ENCODE measurements at regions of chr7 and their contacts with region 1.

Region 1: GRCh38 chr7:142782922-142783900 is 12.4 kb downstream of the PRSS2 start:
- DNase-seq: peak; percentile 85 to 90
- H3K4me3 ChIP-seq: peak overlapping the region in 1 of 2 donors; percentile 43
- H3K27ac ChIP-seq: no peak overlapping the region
- H3K4me1 ChIP-seq: peaks cover 0 to 4% (median 0%) of the 10 kb centered on the region in 4 donors
- H3K27me3 ChIP-seq: peaks cover 0 to 4% of the 10 kb centered on the region in 2 donors
- CTCF ChIP-seq: peak; percentile 88 to 95

Region 2: DNA sequence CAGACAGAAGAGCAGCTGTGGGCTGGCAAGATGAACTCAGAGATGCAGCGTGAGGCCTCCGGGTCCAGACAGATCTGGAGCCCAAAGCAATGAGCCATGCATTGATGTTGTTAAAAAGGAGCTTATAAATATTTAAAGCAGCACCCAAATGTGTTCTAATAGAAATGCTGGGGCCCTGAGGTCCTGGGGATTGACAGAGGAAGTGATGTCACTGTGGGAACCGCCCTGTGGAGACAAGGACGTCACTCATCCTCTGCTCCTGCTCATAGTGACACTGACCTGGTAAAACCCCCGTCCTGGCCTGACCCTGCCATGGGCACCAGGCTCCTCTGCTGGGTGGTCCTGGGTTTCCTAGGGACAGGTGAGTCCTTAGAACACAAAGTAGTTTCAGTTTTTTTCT is 328.3 kb before region 1 on chr7:
- intact Hi-C with region 1: no loop called
- DNase-seq: no peak
- H3K4me3 ChIP-seq: no peak overlapping the region
- H3K27ac ChIP-seq: no peak overlapping the region
- H3K4me1 ChIP-seq: no peaks in the 10 kb centered on the region
- H3K27me3 ChIP-seq: peaks cover 0 to 2% of the 10 kb centered on the region in 2 donors
- CTCF ChIP-seq: no peak

Region 3: DNA sequence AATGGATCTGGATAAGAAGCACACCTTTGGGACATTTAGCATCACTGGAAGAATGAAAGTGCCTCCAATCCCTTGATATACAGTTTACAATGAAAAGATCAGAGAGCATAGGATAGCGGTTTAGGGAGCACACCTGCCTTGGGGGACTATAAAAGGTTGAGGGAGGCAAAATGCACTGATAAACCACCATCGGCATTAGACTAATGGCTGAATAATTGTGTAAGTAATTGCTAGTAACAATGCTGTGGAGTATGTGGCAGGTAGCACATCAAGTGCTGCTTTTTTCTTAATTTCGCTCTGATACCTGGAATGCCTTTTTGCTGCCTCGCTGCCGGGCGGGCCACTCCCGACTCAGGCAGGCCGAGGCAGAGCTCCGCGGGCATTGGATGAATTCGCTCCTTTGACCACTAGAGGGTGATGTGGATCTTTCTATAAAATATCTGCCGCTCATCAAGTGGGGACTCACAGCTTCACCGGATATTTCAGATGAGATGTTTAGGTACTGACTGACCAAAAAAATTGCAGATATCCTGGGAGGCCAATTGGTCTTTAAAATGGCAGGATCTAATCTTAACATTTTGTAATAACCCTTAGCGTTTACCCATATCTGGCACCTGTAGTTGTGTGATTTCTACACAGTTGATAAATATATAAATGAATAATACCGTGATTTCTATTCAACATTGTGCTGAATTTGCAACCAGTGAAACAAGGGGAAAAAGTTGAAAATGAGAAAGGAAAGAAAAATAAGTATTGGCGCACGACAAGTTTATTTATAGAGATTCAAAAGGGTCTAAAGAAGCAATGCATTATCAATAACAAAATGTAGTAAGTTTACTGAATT is 150.7 kb before region 1 on chr7:
- intact Hi-C with region 1: loop called (anchors 5 kb)
- DNase-seq: no peak
- H3K4me3 ChIP-seq: no peak overlapping the region
- H3K27ac ChIP-seq: no peak overlapping the region
- H3K4me1 ChIP-seq: no peaks in the 10 kb centered on the region
- H3K27me3 ChIP-seq: peaks cover 0 to 17% of the 10 kb centered on the region in 2 donors
- CTCF ChIP-seq: peak; percentile 58 to 59

Region 4: DNA sequence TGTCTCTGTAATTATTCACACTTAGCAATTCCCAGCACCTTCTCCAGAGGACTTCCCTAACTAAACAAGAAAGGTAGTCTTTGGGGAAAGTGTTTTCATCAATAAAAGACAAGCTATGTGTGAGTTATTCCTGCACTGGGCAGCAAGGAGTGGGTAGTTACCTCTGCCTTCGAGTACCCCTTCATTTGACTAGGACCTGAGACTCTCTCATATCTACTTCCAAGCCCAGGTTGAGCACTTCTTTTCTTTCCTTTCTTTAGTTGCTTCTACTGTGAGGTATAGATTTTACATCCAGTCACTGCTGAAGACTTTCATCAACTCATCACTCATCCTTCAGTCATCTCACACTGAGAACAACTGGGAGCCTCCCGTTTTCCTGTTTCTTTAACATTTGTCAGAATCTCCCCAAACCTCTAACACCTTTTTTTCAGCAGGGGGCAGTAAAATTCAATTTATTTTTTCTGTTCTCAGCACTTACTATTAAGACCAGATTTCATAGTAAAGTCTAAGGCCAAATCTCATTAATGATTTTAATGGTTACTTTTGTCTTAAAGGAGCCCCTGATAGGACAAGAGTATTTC is 114.0 kb before region 1 on chr7:
- intact Hi-C with region 1: loop called (anchors 5 kb)
- DNase-seq: no peak
- H3K4me3 ChIP-seq: no peak overlapping the region
- H3K27ac ChIP-seq: no peak overlapping the region
- H3K4me1 ChIP-seq: no peaks in the 10 kb centered on the region
- H3K27me3 ChIP-seq: no peaks in the 10 kb centered on the region
- CTCF ChIP-seq: peak; percentile 21 to 41

Region 5: GRCh38 chr7:142873281-142873787 is 90.1 kb after region 1 on chr7:
- intact Hi-C with region 1: no loop called
- DNase-seq: no peak
- H3K4me3 ChIP-seq: no peak overlapping the region
- H3K27ac ChIP-seq: no peak overlapping the region
- H3K4me1 ChIP-seq: no peaks in the 10 kb centered on the region
- H3K27me3 ChIP-seq: peaks cover 0 to 4% of the 10 kb centered on the region in 2 donors
- CTCF ChIP-seq: peak; percentile 6 to 28

Measured in tibial artery (tissue), 4 donors.